ENCODE measurements at regions of chr7 and their contacts with region 1.

Region 1: DNA sequence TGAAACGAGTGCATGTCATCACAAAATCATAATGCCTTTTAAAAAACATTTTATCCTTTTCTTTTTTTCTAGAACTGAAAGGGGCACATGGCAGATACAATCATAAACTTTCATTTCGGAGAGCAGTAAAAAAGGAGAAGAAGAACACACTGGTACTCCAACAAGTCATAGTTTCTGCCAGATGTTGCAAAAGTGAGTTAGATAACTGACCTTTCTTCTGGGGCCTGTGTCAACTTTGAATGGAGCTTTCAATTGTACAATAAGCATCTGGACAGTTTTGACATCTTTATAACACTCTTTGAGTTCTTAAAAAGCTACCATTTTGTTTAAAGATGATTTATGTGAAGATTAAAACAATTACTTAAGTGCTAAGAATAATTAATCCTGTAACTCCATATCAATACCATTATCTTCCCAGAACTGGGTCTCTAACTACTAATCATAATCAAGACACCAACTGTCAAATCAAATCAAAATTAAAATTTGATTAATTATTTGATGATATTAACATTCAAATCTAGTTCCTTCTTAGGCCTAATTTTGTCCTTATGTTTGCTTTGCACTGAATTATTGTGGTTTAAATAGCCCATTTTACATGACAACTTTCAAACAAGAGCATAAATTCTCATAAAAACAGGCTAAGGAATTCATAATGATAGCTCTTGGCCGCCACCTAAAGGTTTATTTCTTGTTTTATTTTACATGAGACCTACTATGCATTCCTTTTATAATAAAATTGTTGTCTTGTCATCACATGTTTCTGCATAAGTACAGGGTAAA is 19.5 kb upstream of the ITGB8 start:
- DNase-seq: peak; percentile 57
- H3K4me3 ChIP-seq: no peak overlapping the region
- H3K27ac ChIP-seq: no peak overlapping the region
- H3K4me1 ChIP-seq: no peaks in the 10 kb centered on the region
- H3K27me3 ChIP-seq: no peaks in the 10 kb centered on the region
- CTCF ChIP-seq: peak; percentile 65

Region 2: GRCh38 chr7:19754521-19755116 is 556.5 kb before region 1 on chr7:
- CTCF ChIA-PET with region 1: no interaction called
- POLR2A ChIA-PET with region 1: no interaction called
- intact Hi-C with region 1: loop called (anchors 5 kb)
- DNase-seq: peak; percentile 60
- H3K4me3 ChIP-seq: no peak overlapping the region
- H3K27ac ChIP-seq: no peak overlapping the region
- H3K4me1 ChIP-seq: no peaks in the 10 kb centered on the region
- H3K27me3 ChIP-seq: peaks cover 42% of the 10 kb centered on the region
- CTCF ChIP-seq: peak; percentile 84

Region 3: DNA sequence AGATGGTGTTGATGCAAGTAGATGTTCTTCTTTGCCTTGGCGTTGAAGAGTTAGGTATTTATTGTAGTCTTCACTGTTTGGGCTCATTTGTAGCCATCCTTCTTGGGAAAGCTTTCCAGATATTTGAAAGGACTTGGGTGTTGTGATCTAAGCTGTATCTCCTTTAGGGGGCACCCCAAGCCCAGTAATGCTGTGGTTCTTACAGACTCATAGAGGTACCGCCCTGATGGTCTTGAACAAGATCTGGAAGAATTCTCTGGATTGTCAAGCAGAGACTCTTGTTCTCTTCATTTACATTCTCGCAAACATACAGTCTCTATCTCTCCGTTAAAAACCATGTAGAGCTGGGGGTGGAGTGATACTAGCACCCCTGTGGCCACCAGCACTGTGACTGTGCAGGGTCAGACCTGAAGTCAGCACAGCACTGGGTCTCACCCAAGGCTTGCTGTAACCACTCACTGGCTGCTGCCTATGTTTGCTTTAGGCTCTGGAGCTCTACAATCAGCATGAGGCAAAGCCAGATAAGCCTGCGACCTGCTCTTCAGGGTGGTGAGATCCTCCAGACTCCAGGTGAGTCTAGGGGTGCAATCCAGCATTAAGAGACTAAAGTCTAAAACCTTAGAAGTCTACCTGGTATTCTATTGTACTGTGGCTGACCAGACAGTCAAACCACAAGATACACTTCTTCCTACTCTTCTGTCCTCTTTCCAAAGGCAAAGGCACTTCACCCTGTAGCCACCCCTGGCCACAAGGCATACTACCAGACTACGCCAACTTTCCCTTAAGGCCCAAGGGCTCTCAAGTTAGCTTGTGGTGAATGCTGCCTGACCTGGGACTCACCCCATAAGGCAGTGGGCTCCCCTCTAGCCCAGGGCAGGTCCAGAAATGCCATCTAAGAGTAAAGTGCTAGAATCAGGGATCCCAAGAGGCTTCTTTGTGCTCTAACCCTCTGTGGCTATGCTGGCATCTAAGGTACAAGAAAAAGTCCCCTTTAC is 328.0 kb before region 1 on chr7:
- CTCF ChIA-PET with region 1: no interaction called
- POLR2A ChIA-PET with region 1: no interaction called
- intact Hi-C with region 1: loop called (anchors 5 kb)
- DNase-seq: peak; percentile 53
- H3K4me3 ChIP-seq: no peak overlapping the region
- H3K27ac ChIP-seq: no peak overlapping the region
- H3K4me1 ChIP-seq: no peaks in the 10 kb centered on the region
- H3K27me3 ChIP-seq: peaks cover 2% of the 10 kb centered on the region
- CTCF ChIP-seq: peak; percentile 46

Region 4: DNA sequence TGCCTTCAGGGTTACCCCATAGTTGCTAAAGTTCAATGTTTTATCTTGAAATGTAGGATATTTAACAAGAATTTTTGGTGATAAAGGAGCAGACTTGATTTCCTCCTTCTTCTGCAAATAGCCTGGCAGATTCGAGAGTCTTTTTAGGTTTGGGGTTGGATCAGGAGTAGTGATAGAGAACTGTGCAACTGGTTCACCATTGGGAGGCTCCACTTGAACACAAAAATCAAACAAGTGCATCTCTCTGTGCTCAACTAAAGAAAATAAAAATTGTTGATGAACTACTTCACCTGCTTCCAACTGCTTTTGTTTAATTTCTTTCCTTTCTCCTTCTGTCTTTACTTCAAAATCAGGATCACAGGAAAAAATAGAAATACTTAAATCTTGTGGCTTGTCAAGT is 152.5 kb before region 1 on chr7:
- CTCF ChIA-PET with region 1: no interaction called
- POLR2A ChIA-PET with region 1: no interaction called
- intact Hi-C with region 1: loop called (anchors 5 kb)
- DNase-seq: peak; percentile 18
- H3K4me3 ChIP-seq: no peak overlapping the region
- H3K27ac ChIP-seq: no peak overlapping the region
- H3K4me1 ChIP-seq: no peaks in the 10 kb centered on the region
- H3K27me3 ChIP-seq: peaks cover 14% of the 10 kb centered on the region
- CTCF ChIP-seq: peak; percentile 40; the same call in 1 of the 2 replicates

Region 5: DNA sequence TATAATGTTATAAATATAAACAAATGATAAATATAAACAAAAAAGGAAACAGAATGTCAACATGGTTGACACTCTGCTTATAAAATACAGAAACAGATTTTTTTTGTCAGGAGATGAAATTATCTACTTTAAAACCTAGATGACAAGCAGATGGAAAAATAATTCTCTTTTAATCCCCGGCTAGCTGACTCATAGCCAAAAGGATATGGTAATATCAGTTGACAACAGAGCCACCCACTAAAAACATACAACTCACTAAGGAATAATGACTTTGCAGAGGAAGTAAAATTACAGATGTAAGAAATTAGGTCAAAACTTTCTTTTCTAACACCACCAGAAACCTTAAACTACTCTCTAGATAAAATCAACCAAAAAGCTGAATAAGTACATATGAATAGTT is 173.2 kb after region 1 on chr7:
- CTCF ChIA-PET with region 1: no interaction called
- POLR2A ChIA-PET with region 1: no interaction called
- intact Hi-C with region 1: no loop called
- DNase-seq: peak; percentile 37
- H3K4me3 ChIP-seq: no peak overlapping the region
- H3K27ac ChIP-seq: no peak overlapping the region
- H3K4me1 ChIP-seq: peaks cover 3% of the 10 kb centered on the region
- H3K27me3 ChIP-seq: no peaks in the 10 kb centered on the region
- CTCF ChIP-seq: no peak

Measured in A673 (cell line).